Caco-2 (cell line): ENCODE measurements at regions of chr5 and their contacts with region 1.

Region 1: DNA sequence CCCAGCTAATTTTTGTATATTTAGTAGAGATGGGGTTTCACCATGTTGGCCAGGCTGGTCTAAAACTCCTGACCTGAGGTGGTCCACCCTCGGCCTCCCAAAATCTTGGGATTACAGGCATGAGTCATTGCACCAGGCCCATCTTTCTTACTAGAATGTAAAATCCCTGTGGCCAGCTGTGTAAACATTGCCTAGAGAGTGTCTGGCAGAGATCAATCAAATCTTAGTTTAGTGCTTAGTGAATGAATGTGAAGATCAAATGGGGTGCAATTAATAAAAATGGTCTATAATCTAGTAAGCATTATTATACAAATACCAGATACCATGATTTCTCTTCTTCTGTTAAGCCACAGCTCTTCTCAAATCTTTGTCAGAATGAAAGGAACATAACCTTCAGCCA is 289.9 kb downstream of the KCTD16 start:
- DNase-seq: no peak
- H3K4me3 ChIP-seq: no peak overlapping the region
- H3K4me3 Mint-ChIP-seq: no peak overlapping the region
- H3K27ac Mint-ChIP-seq: no peak overlapping the region
- H3K4me1 ChIP-seq: no peaks in the 10 kb centered on the region
- H3K4me1 Mint-ChIP-seq: peaks cover 6% of the 10 kb centered on the region
- H3K27me3 ChIP-seq: no peaks in the 10 kb centered on the region
- H3K27me3 Mint-ChIP-seq: no peaks in the 10 kb centered on the region
- CTCF ChIP-seq: no peak

Region 2: DNA sequence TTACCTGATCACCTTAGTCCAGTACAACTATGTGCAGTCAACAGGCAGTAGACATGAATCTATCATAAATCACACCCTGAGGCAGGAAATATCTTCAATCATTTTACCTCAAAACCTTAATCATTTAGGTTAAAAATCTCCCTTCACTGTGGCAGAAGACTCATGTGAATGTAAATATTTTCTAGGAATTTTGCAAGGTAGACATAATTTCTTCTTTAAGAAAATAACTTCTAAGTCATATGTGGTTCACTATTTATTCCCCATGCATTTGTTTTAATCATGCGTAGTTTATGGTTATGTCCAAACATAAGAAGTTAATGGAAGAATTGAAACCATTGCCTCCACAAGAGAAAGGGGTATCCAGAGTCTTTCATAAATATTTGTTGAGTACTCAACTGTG is 551.6 kb before region 1 on chr5:
- CTCF ChIA-PET with region 1: no interaction called
- POLR2A ChIA-PET with region 1: no interaction called
- intact Hi-C with region 1: no loop called
- DNase-seq: no peak
- H3K4me3 ChIP-seq: no peak overlapping the region
- H3K4me3 Mint-ChIP-seq: no peak overlapping the region
- H3K27ac Mint-ChIP-seq: no peak overlapping the region
- H3K4me1 ChIP-seq: no peaks in the 10 kb centered on the region
- H3K4me1 Mint-ChIP-seq: no peaks in the 10 kb centered on the region
- H3K27me3 ChIP-seq: no peaks in the 10 kb centered on the region
- H3K27me3 Mint-ChIP-seq: peaks cover 4% of the 10 kb centered on the region
- CTCF ChIP-seq: no peak

Region 3: DNA sequence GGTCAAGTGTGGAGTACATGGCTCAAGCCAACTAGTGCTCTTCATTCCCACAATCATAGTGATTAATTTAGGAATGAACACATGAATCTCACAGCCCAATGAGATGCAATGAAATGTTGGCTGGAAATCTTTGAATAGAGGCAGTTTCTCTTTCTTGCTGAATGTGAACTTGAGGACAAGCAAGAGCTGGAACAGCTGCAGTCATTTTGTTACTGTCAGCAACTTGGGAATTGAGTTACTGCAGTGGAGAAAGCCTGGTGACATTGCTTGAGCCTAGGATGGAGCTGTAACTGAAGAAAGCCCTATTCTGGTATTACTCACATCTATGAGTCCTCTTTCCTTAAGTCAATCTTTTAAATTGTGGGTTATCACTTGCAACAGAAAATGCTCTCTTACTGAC is 352.5 kb before region 1 on chr5:
- CTCF ChIA-PET with region 1: no interaction called
- POLR2A ChIA-PET with region 1: no interaction called
- intact Hi-C with region 1: no loop called
- DNase-seq: no peak
- H3K4me3 ChIP-seq: no peak overlapping the region
- H3K4me3 Mint-ChIP-seq: no peak overlapping the region
- H3K27ac Mint-ChIP-seq: no peak overlapping the region
- H3K4me1 ChIP-seq: no peaks in the 10 kb centered on the region
- H3K4me1 Mint-ChIP-seq: no peaks in the 10 kb centered on the region
- H3K27me3 ChIP-seq: no peaks in the 10 kb centered on the region
- H3K27me3 Mint-ChIP-seq: no peaks in the 10 kb centered on the region
- CTCF ChIP-seq: no peak

Region 4: GRCh38 chr5:144170276-144171024 is 290.1 kb before region 1 on chr5 and contains the starts of genes KCTD16 and YIPF5:
- CTCF ChIA-PET with region 1: no interaction called
- POLR2A ChIA-PET with region 1: no interaction called
- intact Hi-C with region 1: loop called (anchors 1 kb)
- DNase-seq: peak; percentile 96 to 98
- H3K4me3 ChIP-seq: peak within 1 kb of the TSS; percentile 70
- H3K4me3 Mint-ChIP-seq: peak within 1 kb of the TSS; percentile 96
- H3K27ac Mint-ChIP-seq: peak within 1 kb of the TSS; percentile 96
- H3K4me1 ChIP-seq: no peaks in the 10 kb centered on the region
- H3K4me1 Mint-ChIP-seq: peaks cover 7% of the 10 kb centered on the region
- H3K27me3 ChIP-seq: no peaks in the 10 kb centered on the region
- H3K27me3 Mint-ChIP-seq: peaks cover 2% of the 10 kb centered on the region
- CTCF ChIP-seq: no peak
- total RNA-seq, gene KCTD16: 0.29 and 0.51 TPM in 2 replicates
- total RNA-seq, gene YIPF5: 57.8 and 59.2 TPM in 2 replicates

Region 5: GRCh38 chr5:144472221-144472620 is 11.6 kb after region 1 on chr5:
- CTCF ChIA-PET with region 1: no interaction called
- POLR2A ChIA-PET with region 1: no interaction called
- intact Hi-C with region 1: no loop called
- DNase-seq: no peak
- H3K4me3 ChIP-seq: no peak overlapping the region
- H3K4me3 Mint-ChIP-seq: no peak overlapping the region
- H3K27ac Mint-ChIP-seq: no peak overlapping the region
- H3K4me1 ChIP-seq: no peaks in the 10 kb centered on the region
- H3K4me1 Mint-ChIP-seq: peaks cover 6% of the 10 kb centered on the region
- H3K27me3 ChIP-seq: no peaks in the 10 kb centered on the region
- H3K27me3 Mint-ChIP-seq: no peaks in the 10 kb centered on the region
- CTCF ChIP-seq: no peak

Region 6: GRCh38 chr5:145598983-145599382 is 1138.4 kb after region 1 on chr5:
- CTCF ChIA-PET with region 1: no interaction called
- POLR2A ChIA-PET with region 1: no interaction called
- intact Hi-C with region 1: no loop called
- DNase-seq: no peak
- H3K4me3 ChIP-seq: no peak overlapping the region
- H3K4me3 Mint-ChIP-seq: no peak overlapping the region
- H3K27ac Mint-ChIP-seq: no peak overlapping the region
- H3K4me1 ChIP-seq: no peaks in the 10 kb centered on the region
- H3K4me1 Mint-ChIP-seq: no peaks in the 10 kb centered on the region
- H3K27me3 ChIP-seq: no peaks in the 10 kb centered on the region
- H3K27me3 Mint-ChIP-seq: no peaks in the 10 kb centered on the region
- CTCF ChIP-seq: no peak